ENCODE measurements at regions of chr2 and their contacts with region 1.

Region 1: GRCh38 chr2:191051825-191052778 is 38.1 kb upstream of the STAT1 start:
- DNase-seq: no peak
- H3K4me3 ChIP-seq: no peak overlapping the region
- CTCF ChIP-seq: peak; percentile 26

Region 2: GRCh38 chr2:191038241-191038725 is 13.8 kb before region 1 on chr2:
- CTCF ChIA-PET with region 1: interaction called, 44 read pairs
- POLR2A ChIA-PET with region 1: interaction called, 4 read pairs
- DNase-seq: no peak
- H3K4me3 ChIP-seq: no peak overlapping the region
- CTCF ChIP-seq: no peak

Region 3: DNA sequence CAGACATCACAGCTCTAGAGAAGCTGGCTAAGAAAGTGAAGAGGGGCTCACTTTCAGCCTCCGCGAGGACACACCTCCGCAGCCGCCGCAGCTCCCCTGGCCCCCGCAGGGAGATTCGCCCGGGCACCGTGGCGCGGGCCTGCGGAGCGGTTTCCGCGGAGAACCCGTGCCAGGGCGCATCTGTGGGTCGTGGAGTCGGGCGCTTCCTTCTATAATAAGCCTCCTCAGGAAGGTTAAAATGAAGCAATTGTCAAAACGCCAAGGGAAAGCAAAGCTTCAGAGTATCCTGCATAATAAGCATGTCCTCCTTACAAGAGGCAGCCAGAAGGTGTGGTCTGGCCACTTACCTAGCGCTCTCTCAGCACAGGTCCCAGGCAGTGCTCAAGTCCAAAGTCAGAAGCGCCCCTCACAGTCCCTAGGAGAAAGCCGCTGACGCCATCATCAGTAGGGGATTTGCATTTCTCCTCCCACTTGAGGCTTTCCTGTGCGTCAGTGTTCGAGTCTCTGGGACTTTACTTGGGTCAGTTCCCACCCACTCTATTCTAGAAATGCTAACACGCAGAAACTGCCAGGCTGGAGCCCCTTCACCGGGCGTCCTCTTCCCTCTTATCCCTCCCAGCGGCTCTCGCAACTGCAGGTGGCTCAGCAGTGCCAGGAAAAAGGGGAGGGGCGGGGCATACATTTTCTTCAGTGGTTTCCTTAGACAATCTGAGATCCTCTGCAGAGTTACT is 98.7 kb after region 1 on chr2 and contains the start of gene STAT4:
- CTCF ChIA-PET with region 1: interaction called, 542 read pairs
- POLR2A ChIA-PET with region 1: no interaction called
- DNase-seq: no peak
- H3K4me3 ChIP-seq: peak within 1 kb of the TSS; percentile 58
- CTCF ChIP-seq: no peak

Region 4: GRCh38 chr2:191508738-191509137 is 456.6 kb after region 1 on chr2:
- CTCF ChIA-PET with region 1: interaction called, 69 read pairs
- POLR2A ChIA-PET with region 1: no interaction called
- DNase-seq: no peak
- H3K4me3 ChIP-seq: no peak overlapping the region
- CTCF ChIP-seq: no peak

Region 5: GRCh38 chr2:191521608-191522208 is 469.6 kb after region 1 on chr2:
- CTCF ChIA-PET with region 1: interaction called, 108 read pairs
- POLR2A ChIA-PET with region 1: no interaction called
- DNase-seq: no peak
- H3K4me3 ChIP-seq: no peak overlapping the region
- CTCF ChIP-seq: peak; percentile 47

Region 6: GRCh38 chr2:191650896-191651773 is 599.0 kb after region 1 on chr2:
- CTCF ChIA-PET with region 1: no interaction called
- POLR2A ChIA-PET with region 1: no interaction called
- DNase-seq: no peak
- H3K4me3 ChIP-seq: no peak overlapping the region
- CTCF ChIP-seq: no peak